Esophagus squamous epithelium (tissue), 5 donors: ENCODE measurements at regions of chr16 and their contacts with region 1.

Region 1: DNA sequence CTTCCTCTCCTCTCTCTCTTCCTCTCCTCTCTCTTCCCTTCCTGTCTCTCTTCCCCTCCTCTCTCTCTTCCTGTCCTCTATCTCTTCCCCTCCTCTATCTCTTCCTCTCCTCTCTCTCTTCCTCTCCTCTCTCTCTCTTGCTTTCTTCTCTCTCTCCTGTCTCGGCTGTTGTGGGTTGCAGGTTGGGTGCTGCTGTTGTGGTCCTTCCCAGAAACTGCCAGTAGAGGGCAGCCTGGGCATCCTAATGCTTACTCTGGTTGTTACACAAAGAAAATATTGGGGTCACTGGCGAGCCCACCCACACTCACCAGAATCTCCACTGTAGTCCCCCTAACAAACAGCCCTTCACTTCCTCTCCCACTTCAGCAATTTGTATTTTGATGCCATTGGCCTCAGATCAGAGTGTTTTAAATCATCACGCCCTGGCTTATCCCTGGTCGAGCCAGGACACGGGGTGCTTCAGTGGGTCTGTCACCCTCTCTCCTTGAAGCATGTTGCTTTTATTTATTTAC is 4.9 kb upstream of the MMP15 start:
- DNase-seq: no peak
- H3K4me3 ChIP-seq: no peak overlapping the region
- H3K27ac ChIP-seq: no peak overlapping the region
- H3K4me1 ChIP-seq: peaks cover 12 to 50% (median 22%) of the 10 kb centered on the region in 3 donors
- H3K27me3 ChIP-seq: peaks cover 0 to 8% (median 0%) of the 10 kb centered on the region in 4 donors
- CTCF ChIP-seq: peak in 5 of 6 experiments; percentile 66 to 81 (median 77)
- POLR2A ChIP-seq: no peak

Region 2: GRCh38 chr16:58124601-58124915 is 103.9 kb after region 1 on chr16:
- intact Hi-C with region 1: loop called (anchors 5 kb)
- DNase-seq: no peak
- H3K4me3 ChIP-seq: no peak overlapping the region
- H3K27ac ChIP-seq: peak overlapping the region in 3 of 4 donors; percentile 46 to 96 (median 66)
- H3K4me1 ChIP-seq: peaks cover 50 to 93% (median 71%) of the 10 kb centered on the region in 3 donors
- H3K27me3 ChIP-seq: no peaks in the 10 kb centered on the region
- CTCF ChIP-seq: no peak
- POLR2A ChIP-seq: no peak

Region 3: GRCh38 chr16:58198022-58198683 is 177.5 kb after region 1 on chr16 and contains the start of gene CSNK2A2:
- intact Hi-C with region 1: loop called (anchors 5 kb)
- DNase-seq: no peak
- H3K4me3 ChIP-seq: peak within 1 kb of the TSS; percentile 48 to 89 (median 74)
- H3K27ac ChIP-seq: peak within 1 kb of the TSS; percentile 57 to 77 (median 66)
- H3K4me1 ChIP-seq: peaks cover 6 to 34% (median 8%) of the 10 kb centered on the region in 3 donors
- H3K27me3 ChIP-seq: peaks cover 0 to 2% (median 0%) of the 10 kb centered on the region in 4 donors
- CTCF ChIP-seq: peak in 2 of 6 experiments; percentile 8 to 52
- POLR2A ChIP-seq: no peak
- total RNA-seq, gene CSNK2A2: 22.3 to 32.8 (median 29.1) TPM